ENCODE measurements at regions of chr19 and their contacts with region 1.

Region 1: DNA sequence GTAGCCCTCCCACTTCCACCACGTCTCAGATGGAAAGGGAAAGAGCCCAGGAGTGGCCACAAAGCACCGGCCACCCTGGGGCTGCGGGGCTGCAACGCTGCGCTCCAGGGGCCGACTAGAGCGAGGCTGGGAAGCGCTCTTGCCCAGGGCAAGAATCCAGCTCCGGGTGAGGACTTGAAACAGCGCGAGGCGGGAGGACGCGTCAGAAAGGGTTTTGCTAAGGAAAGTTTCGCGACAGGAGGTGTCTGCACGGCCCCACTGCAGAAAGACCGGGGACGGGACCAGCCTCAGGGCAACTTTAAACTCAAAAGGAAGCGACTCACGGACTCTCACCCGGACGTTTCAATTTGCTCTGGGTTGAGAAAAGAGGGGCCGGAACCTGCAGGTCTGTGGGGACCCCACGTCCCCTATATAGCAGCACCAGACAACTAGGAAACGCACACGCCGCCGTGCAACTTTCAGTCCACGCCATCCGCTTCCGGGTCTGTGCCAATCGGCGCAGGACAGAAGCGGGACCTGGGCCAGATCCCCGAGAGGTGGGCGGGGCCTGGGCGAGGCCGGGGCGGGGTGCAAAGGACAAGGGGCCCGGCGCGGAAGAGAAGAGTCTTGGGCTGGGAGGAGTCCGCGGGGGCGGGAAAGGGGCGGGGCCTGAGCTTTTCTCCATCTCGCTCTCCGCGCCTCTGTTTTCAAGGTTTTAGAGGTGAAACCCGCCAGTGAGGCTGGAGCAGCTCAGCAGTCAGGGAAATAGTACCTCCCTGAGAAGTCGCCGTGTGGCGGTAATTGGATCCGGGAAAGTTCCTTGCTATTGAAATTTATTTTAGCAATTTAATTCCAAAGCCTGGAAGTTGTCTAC is at the start of gene ZNF816:
- DNase-seq: peak; percentile 98
- ATAC-seq: peak; percentile 99 to 100
- total RNA-seq, gene ZNF816: 3.8 to 5.1 TPM

Region 2: DNA sequence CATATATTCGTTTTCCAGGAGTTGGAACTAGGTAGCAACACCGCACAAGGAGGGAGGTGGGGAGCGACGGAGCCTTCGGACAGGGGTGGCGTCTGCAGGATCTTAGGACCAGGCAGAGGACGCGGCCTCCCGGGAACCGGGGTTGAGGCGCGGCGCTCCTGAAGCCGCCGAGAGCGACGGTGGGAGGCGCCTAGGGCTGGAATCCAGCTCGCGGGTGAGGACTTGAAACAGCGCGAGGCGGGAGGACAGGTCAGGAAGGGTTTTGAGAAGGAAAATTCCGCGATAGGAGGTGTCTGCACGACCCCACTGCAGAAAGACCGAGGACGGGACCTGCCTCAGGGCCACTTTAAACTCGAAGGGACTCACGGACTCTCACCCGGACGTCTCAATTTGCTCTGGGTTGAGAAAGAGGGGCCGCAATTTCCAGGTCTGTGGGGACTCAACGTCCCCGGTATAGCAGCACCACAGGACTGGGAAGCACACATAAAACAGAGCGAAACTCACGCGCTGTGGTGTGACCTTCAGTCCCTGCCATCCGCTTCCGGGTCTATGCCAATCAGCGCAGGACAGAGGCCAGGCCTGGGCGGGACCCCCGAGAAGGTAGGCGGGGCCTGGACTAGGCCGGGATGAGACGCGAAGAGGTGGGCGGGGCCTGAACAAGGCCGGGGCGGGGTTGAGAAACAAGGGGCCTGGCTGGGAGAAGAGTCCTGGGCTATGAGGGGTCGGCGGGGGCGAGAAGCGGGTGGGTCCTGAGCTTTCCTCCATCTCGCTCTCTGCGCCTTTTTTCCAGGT is 65.3 kb before region 1 on chr19 and contains the start of gene ZNF320:
- intact Hi-C with region 1: loop called in 1 of 2 experiments (anchors 5 kb)
- DNase-seq: peak; percentile 98
- ATAC-seq: peak; percentile 100
- total RNA-seq, gene ZNF320: 10.7 to 12.9 TPM

Region 3: DNA sequence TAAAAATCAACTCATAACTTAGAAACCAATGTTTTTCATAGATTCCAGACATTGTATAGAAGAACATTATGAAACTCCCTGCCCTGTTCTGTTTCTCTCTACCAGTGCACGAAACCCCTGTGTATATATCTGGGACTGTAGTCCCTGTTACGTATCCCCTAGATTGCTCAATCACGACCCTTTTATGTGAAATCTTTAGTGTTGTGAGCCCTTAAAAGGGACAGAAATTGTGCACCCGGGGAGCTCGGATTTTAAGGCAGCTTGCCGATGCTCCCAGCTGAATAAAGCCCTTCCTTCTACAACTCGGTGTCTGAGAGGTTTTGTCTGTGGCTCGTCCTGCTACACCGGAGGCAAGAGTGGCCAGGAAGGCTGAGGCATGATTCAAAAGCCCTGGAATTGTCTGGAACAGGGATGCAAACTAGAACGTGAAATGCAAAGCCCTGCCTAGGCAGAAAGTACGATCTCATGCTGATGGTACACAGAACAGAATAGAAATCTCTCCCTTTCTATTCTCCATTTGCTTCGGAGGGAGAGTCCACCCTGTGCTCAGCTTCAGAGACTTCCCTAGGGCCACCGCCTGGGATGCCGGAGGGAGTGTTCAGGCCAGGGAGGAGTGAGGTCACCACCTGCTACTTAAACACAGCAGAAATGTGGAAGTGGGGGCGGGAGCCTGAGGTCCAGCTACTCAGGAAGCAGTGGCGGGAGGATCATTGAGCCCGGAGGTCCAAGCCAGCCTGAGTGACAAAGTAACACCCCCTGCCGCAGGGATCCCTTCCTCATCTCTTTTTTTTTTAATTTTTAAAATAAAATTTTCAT is 38.6 kb before region 1 on chr19:
- intact Hi-C with region 1: loop called in 1 of 2 experiments (anchors 2 kb)
- DNase-seq: peak; percentile 70
- ATAC-seq: peak; percentile 31 to 65

Region 4: DNA sequence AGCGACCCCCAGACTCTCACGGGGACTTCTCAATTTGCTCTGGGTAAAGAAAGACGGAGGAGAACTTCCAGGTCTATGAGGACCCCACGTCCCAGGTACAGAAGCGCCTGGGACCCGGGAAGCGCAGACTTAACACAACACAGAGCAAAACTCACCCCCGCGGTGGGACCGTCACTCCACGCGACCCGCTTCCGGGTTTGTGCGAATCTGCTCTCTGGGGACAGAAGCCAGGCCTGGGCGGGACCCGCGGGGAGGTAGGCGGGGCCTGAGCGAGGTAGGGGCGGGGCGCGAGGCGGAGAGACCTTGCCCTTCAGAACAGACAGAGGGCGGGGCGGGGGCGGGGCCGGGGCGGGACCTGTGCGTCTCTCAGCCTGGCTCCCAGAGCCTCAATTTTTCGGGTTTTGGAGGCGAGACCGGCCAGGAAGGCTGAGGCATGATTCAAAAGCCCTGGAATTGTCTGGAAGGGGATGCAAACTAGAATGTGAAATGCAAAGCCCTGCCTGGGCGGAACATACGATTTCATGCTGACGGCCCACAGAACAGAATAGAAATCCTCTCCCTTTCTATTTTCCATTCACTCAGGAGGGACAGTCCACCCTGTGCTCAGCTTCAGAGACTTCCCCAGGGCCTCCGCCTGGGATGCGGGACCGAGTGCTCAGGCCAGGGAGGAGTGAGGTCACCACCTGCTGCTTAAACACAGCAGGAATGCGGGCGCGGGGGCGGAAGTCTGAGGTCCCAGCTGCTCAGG is 20.1 kb before region 1 on chr19:
- intact Hi-C with region 1: loop called in 1 of 2 experiments (anchors 2 kb)
- DNase-seq: peak; percentile 92
- ATAC-seq: peak; percentile 99 to 100

Region 5: GRCh38 chr19:53086949-53087348 is 124.3 kb after region 1 on chr19:
- intact Hi-C with region 1: no loop called
- DNase-seq: peak; percentile 69
- ATAC-seq: peak; percentile 54 to 81